ENCODE measurements at regions of chr12 and their contacts with region 1.

Region 1: DNA sequence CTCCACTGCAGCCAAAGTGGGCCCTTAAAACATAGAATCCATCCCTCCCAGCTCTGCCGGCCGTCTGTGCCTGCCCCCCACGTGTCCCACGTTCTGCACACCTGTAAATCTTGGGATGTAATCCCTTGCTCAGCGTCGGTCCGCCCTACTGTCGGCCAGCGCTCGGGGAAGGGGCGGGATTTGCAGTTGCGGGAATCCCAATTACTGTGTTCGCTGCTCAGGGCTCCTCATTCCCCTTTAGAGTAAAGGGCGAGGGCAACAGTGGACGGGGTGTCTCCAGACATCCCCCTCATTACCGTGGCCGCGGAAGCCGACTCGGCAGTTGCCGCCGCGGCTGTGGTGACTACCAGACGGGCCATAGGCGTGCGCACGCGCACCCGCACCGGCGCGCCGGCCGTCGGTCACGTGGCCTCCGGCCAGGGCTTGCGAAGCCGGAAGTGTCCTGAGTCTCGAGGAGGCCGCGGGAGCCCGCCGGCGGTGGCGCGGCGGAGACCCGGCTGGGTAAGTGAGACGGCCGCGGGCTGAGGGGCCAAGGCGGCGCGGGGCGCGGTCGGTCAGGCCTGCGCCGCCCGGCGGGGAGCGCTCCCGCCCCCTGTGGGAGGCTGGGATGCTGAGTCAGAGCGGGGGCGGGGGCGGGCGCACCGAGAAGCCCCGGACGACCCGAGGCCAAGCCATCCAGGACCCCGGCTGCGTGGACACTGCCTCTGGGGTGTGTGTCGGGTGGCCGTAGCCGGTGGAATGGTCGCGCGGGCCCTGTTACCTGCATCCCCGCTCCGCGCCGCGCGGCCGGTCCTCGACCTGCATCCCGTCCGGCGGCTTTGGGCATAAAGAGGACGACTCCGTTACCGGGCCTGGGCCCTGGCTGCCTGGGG is at the start of gene TBK1:
- DNase-seq: peak; percentile 91 to 93 (median 92)
- ATAC-seq: peak; percentile 88
- H3K4me3 ChIP-seq: peak within 1 kb of the TSS; percentile 88
- H3K27ac ChIP-seq: peak within 1 kb of the TSS; percentile 98
- H3K4me1 ChIP-seq: peaks cover 11 to 21% of the 10 kb centered on the region in 2 experiments
- H3K27me3 ChIP-seq: no peaks in the 10 kb centered on the region
- CTCF ChIP-seq: 0 out of 6 replicates have a peak, but pooled peaks of 1 of the 3 experiments have one; percentile 2
- EP300 ChIP-seq: no peak
- POLR2A ChIP-seq: peak; percentile 83
- RAD21 ChIP-seq: no peak
- polyA plus RNA-seq, gene TBK1: 20.4 to 24.9 TPM

Region 2: DNA sequence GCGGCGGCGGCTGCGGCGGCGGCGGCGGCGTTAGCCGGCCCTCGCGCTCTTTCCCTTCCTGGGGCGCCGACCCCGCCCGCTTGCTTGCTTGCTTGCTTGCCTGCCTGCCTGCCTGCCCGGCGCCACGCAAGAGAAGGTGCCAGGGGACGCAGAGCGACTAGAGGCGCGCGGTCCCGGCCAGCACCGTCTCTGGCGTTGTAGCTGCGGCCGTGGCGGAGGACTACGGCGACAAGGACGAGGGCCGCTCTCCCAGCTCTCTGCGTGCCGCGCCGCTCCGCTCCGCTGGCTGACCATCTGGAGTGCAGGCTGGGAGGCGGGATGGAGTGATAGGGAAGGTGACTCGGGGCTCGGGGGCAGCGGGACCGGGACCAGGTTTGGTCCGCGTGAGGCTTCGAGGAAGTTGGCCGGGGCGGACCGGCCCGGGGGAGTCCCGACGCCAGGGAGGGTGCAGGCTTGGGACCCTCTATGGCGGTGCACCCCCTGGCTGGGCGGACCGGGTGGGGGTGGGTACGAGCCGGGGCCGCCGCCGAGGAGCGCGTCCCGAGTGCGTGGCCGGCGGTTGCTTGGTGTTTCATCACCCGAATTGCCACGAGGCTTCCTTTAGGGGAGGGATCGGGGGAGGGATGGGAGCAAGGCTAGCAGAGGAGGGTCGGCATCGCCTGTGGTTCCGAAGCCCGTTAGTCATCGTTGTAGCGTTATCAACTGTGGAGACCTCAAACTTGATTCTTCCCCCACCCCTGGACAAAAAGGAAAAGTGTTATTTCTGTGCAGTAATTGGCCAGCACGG is 47.3 kb before region 1 on chr12:
- CTCF ChIA-PET with region 1: no interaction called
- POLR2A ChIA-PET with region 1: interaction called, 3 read pairs
- in situ Hi-C with region 1: no loop called
- intact Hi-C with region 1: loop called (anchors 5 kb)
- DNase-seq: peak; percentile 73 to 89 (median 76)
- ATAC-seq: peak; percentile 73
- H3K4me3 ChIP-seq: peak overlapping the region; percentile 95
- H3K27ac ChIP-seq: peak overlapping the region; percentile 100
- H3K4me1 ChIP-seq: peaks cover 20 to 32% of the 10 kb centered on the region in 2 experiments
- H3K27me3 ChIP-seq: no peaks in the 10 kb centered on the region
- CTCF ChIP-seq: no peak
- EP300 ChIP-seq: peak; percentile 79
- POLR2A ChIP-seq: peak; percentile 87
- RAD21 ChIP-seq: no peak

Region 3: DNA sequence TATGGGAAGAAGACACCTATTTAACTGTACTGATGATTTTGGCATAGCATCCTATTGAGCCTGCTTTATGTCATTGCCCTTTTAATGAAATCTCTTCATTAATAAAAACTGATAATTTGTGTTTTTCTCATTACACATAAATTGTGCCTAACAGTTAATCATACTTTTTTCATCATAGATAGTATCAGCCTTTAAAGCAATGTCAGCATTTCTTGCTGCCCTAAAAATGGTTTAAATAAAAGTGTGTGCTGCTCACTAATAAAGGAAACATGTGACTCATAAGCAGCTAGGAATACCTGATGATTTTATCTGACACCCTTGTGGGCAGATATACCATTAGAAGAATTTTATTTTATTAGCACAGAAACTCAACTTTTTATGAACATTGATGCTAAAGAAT is 26.7 kb after region 1 on chr12:
- CTCF ChIA-PET with region 1: no interaction called
- POLR2A ChIA-PET with region 1: no interaction called
- in situ Hi-C with region 1: no loop called
- intact Hi-C with region 1: no loop called
- DNase-seq: no peak
- ATAC-seq: no peak
- H3K4me3 ChIP-seq: no peak overlapping the region
- H3K27ac ChIP-seq: no peak overlapping the region
- H3K4me1 ChIP-seq: no peaks in the 10 kb centered on the region
- H3K27me3 ChIP-seq: no peaks in the 10 kb centered on the region
- CTCF ChIP-seq: no peak
- EP300 ChIP-seq: no peak
- POLR2A ChIP-seq: no peak
- RAD21 ChIP-seq: no peak